Activated CD4-positive, alpha-beta memory T cell treated with anti-CD3 and anti-CD28 coated beads for 36 hours (primary cell): ENCODE measurements at regions of chr10 and their contacts with region 1.

Region 1: GRCh38 chr10:123154092-123154921 is at the start of gene BUB3:
- DNase-seq: peak; percentile 98
- H3K4me3 Mint-ChIP-seq: peak within 1 kb of the TSS; percentile 100
- H3K27ac Mint-ChIP-seq: peak within 1 kb of the TSS; percentile 100
- H3K4me1 Mint-ChIP-seq: peaks cover 61% of the 10 kb centered on the region
- H3K27me3 Mint-ChIP-seq: peaks cover 9% of the 10 kb centered on the region
- total RNA-seq, gene BUB3: 259 to 265 TPM

Region 2: DNA sequence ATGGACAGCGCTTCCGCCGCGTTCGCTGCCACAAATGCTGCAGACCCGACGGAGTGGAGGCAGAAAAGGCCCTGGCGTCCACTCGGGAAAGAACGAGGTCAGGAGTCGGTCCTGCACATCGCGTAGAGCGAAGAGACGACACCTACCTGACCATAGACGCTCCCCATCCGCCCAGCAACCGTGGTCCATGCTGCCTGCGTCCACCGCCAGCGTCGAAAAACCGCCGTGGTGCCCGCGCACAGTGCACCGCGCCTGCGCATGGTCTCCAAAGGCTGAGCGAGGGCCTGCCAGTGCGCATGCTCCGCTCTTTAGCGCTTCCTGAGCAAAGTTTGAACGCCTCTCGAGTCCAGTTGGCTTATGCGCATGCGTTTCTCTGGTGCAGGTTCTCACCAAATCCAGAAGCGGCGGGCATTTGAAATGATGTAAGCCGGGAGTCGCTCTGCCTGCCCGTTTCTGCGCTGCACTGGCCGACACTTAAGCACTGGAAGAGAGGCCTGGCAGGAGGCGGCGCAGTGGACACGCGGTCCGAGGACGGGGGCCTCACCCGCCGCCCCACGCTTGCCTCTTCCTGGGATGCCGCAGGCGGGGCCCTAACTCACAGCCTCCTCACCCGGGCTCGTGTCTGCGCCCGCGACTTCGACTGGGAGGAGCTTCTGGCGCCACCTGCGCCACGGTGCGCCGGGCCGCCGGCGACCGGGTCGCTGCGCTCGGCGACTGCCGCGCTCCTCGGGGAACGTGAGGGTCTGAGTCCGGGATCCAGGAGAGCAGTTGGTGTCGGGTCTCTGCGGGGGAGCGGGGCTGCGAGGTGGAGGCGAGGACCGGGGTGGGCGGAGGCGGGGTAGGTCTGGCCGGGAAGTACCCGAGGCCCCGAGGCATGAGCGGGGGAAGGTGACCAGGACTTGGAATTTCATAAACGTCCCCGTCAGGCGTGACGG is 274.7 kb before region 1 on chr10 and contains the start of gene FAM24B:
- CTCF ChIA-PET with region 1: no interaction called
- POLR2A ChIA-PET with region 1: no interaction called
- intact Hi-C with region 1: loop called (anchors 2 kb)
- DNase-seq: peak; percentile 95
- H3K4me3 Mint-ChIP-seq: peak within 1 kb of the TSS; percentile 86
- H3K27ac Mint-ChIP-seq: peak within 1 kb of the TSS; percentile 82
- H3K4me1 Mint-ChIP-seq: peaks cover 52% of the 10 kb centered on the region
- H3K27me3 Mint-ChIP-seq: no peaks in the 10 kb centered on the region
- total RNA-seq, gene FAM24B: 7.2 to 8.1 TPM

Region 3: GRCh38 chr10:123008439-123009205 is 145.7 kb before region 1 on chr10 and contains the starts of genes ACADSB and IKZF5:
- CTCF ChIA-PET with region 1: interaction called, 5 read pairs
- POLR2A ChIA-PET with region 1: no interaction called
- intact Hi-C with region 1: loop called (anchors 1 kb)
- DNase-seq: peak; percentile 98
- H3K4me3 Mint-ChIP-seq: peak within 1 kb of the TSS; percentile 99
- H3K27ac Mint-ChIP-seq: peak within 1 kb of the TSS; percentile 96
- H3K4me1 Mint-ChIP-seq: peaks cover 47% of the 10 kb centered on the region
- H3K27me3 Mint-ChIP-seq: no peaks in the 10 kb centered on the region
- total RNA-seq, gene ACADSB: 22.1 to 25.1 TPM
- total RNA-seq, gene IKZF5: 14.5 to 14.8 TPM

Region 4: DNA sequence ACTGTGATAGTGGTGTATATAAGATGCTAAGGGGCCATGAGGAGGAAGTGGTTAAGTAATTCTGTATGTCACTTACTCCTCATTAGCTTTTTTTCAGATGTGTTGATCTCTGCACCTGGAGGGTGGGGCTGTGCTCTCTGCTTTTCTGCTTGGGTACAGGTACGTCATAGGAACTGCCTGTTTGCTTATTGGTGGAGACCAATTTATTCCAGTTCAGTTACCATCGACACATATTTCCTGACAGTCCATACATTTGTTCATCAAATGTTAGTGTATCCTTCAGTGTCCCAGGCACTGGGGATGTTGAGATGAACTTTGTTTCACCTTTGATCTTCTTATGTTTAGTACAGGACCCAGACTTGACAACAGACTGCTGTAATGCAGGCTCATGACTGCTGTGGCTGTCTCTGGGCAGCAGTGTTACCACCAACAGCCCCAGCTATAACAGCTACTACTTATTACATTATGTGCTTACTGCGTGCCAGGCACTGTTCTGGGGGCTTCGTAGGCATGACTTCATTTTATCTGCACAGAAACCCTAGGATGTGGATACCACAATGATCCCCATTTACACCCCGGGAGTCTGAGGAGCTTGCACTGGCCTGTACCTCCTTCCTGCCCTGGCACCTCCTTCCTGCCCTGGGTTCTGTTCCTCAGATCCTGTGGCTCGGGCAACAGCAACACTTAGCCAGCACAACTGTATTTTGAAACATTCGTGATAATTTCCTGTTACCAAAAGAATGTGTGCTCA is 87.3 kb after region 1 on chr10:
- CTCF ChIA-PET with region 1: no interaction called
- POLR2A ChIA-PET with region 1: interaction called, 6 read pairs
- intact Hi-C with region 1: loop called (anchors 2 kb)
- DNase-seq: peak; percentile 52
- H3K4me3 Mint-ChIP-seq: no peak overlapping the region
- H3K27ac Mint-ChIP-seq: peak overlapping the region; percentile 82
- H3K4me1 Mint-ChIP-seq: peaks cover 24% of the 10 kb centered on the region
- H3K27me3 Mint-ChIP-seq: no peaks in the 10 kb centered on the region

Region 5: DNA sequence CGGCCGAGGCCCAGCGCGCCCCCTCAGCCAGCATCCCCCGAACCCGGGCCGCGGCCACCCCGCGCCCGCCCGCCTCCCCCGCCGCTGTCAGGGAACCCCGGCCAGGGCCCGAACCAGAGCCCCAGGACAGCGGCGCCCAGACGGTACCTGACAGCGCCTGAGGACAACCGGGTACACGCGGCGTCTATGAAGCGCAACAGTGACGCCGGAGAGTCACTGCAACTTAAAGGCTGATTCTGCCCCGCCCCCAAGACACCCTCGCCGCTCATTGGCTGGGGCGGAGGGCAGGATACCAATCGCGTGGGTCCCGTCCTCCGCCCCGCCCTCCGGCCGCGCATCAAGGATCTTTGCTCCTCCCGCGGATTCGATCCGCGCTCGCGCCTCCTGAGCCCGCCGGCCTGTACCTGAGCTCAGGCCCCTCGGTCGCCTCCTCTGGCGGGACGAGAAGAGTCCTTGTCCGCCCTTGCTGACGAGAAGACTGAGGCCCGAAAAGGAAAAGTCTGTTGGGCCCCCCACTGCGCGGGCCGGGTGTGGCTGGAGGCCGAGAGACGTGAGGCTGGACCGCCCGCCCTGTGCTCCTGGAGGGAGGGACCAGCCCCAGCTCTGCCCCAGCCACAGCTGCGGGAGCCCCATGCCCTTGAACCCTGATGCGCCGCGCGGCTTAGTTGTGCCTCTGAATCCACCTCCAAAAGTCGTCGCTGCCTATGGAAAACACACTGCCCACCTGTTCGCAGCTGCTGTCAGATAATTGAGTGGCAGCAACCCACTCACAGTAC is 1264.6 kb after region 1 on chr10 and contains the start of gene OAT:
- CTCF ChIA-PET with region 1: no interaction called
- POLR2A ChIA-PET with region 1: no interaction called
- intact Hi-C with region 1: loop called (anchors 1 kb)
- DNase-seq: peak; percentile 97
- H3K4me3 Mint-ChIP-seq: peak within 1 kb of the TSS; percentile 79
- H3K27ac Mint-ChIP-seq: no peak within 1 kb of the TSS
- H3K4me1 Mint-ChIP-seq: peaks cover 16% of the 10 kb centered on the region
- H3K27me3 Mint-ChIP-seq: peaks cover 7% of the 10 kb centered on the region
- total RNA-seq, gene OAT: 34.6 to 38.1 TPM

Region 6: GRCh38 chr10:124791378-124792348 is 1637.4 kb after region 1 on chr10 and contains the start of gene EEF1AKMT2:
- CTCF ChIA-PET with region 1: no interaction called
- POLR2A ChIA-PET with region 1: no interaction called
- intact Hi-C with region 1: loop called (anchors 10 kb)
- DNase-seq: peak; percentile 89
- H3K4me3 Mint-ChIP-seq: peak within 1 kb of the TSS; percentile 96
- H3K27ac Mint-ChIP-seq: peak within 1 kb of the TSS; percentile 94
- H3K4me1 Mint-ChIP-seq: peaks cover 19% of the 10 kb centered on the region
- H3K27me3 Mint-ChIP-seq: no peaks in the 10 kb centered on the region
- total RNA-seq, gene EEF1AKMT2: 28.2 to 33.1 TPM